Colonic mucosa (tissue), 4 donors: ENCODE measurements at regions of chr12 and their contacts with region 1.

Region 1: GRCh38 chr12:43882578-43883178 is 46.8 kb downstream of the TMEM117 start:
- DNase-seq: peak; percentile 25
- H3K4me3 ChIP-seq: no peak overlapping the region
- H3K27ac ChIP-seq: no peak overlapping the region
- H3K4me1 ChIP-seq: no peaks in the 10 kb centered on the region
- H3K27me3 ChIP-seq: no peaks in the 10 kb centered on the region
- CTCF ChIP-seq: peak; percentile 75

Region 2: DNA sequence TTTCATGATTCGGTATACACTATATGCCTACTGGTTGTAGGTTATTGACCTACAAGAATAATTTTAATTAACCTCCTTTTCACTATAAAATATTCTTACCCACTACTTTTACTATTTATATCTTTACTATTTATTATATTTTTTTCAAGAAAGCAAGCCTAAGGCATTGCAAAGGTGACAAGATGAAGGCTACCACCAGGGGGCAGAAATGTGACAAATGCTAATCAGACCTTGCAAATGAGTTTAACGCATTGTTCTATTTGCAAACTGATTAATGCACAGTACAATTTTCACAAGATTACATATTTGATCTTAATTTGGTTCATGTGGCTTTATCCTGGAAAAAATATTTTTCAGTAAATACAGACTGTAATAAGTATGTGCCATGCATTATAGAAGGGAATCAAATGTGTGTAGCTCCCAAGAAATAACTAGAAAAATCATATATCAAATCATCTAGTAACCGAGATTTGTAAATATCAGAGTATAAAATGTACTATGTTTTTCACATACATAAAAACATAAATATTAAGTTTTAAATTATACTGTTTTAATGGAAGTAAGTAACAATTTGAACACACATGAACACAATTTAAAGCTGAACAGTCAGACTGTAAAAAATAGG is 437.6 kb before region 1 on chr12:
- intact Hi-C with region 1: loop called (anchors 5 kb)
- DNase-seq: peak; percentile 35
- H3K4me3 ChIP-seq: no peak overlapping the region
- H3K27ac ChIP-seq: no peak overlapping the region
- H3K4me1 ChIP-seq: no peaks in the 10 kb centered on the region
- H3K27me3 ChIP-seq: no peaks in the 10 kb centered on the region
- CTCF ChIP-seq: peak; percentile 49

Region 3: GRCh38 chr12:43599071-43599470 is 283.6 kb before region 1 on chr12:
- intact Hi-C with region 1: no loop called
- DNase-seq: no peak
- H3K4me3 ChIP-seq: no peak overlapping the region
- H3K27ac ChIP-seq: no peak overlapping the region
- H3K4me1 ChIP-seq: no peaks in the 10 kb centered on the region
- H3K27me3 ChIP-seq: no peaks in the 10 kb centered on the region
- CTCF ChIP-seq: no peak

Region 4: GRCh38 chr12:43776498-43776897 is 106.2 kb before region 1 on chr12:
- intact Hi-C with region 1: loop called (anchors 5 kb)
- DNase-seq: no peak
- H3K4me3 ChIP-seq: no peak overlapping the region
- H3K27ac ChIP-seq: no peak overlapping the region
- H3K4me1 ChIP-seq: no peaks in the 10 kb centered on the region
- H3K27me3 ChIP-seq: no peaks in the 10 kb centered on the region
- CTCF ChIP-seq: peak; percentile 18

Region 5: DNA sequence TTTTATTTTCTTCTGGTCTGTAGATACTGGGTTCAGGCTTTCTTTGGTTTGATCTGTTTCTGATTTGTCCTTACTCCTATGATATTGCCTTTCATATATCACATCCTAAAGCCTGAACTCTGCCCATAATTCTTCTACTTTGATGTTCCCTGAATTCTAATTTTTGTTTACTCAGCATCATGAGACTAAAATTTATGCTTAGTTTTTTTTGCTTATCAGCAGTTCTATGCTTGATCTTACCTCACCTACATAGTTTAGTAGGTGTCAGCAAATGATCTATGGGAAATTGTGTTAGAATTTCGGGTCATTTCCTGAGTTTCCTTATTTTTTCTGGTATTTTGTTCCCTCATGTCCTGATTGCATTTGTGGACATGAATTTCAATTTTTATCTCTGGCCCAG is 47.4 kb after region 1 on chr12:
- intact Hi-C with region 1: no loop called
- DNase-seq: no peak
- H3K4me3 ChIP-seq: no peak overlapping the region
- H3K27ac ChIP-seq: no peak overlapping the region
- H3K4me1 ChIP-seq: no peaks in the 10 kb centered on the region
- H3K27me3 ChIP-seq: no peaks in the 10 kb centered on the region
- CTCF ChIP-seq: no peak

Region 6: GRCh38 chr12:44206045-44206444 is 323.4 kb after region 1 on chr12:
- intact Hi-C with region 1: no loop called
- DNase-seq: no peak
- H3K4me3 ChIP-seq: no peak overlapping the region
- H3K27ac ChIP-seq: no peak overlapping the region
- H3K4me1 ChIP-seq: no peaks in the 10 kb centered on the region
- H3K27me3 ChIP-seq: no peaks in the 10 kb centered on the region
- CTCF ChIP-seq: no peak